ENCODE measurements at regions of chr6 and their contacts with region 1.

Region 1: GRCh38 chr6:148166339-148166968 is 176.2 kb upstream of the SASH1 start:
- DNase-seq: peak; percentile 75
- H3K4me3 ChIP-seq: no peak overlapping the region
- H3K27ac ChIP-seq: no peak overlapping the region
- H3K4me1 ChIP-seq: peaks cover 5% of the 10 kb centered on the region
- H3K27me3 ChIP-seq: no peaks in the 10 kb centered on the region
- CTCF ChIP-seq: peak; percentile 37 to 39
- POLR2A ChIP-seq: no peak

Region 2: DNA sequence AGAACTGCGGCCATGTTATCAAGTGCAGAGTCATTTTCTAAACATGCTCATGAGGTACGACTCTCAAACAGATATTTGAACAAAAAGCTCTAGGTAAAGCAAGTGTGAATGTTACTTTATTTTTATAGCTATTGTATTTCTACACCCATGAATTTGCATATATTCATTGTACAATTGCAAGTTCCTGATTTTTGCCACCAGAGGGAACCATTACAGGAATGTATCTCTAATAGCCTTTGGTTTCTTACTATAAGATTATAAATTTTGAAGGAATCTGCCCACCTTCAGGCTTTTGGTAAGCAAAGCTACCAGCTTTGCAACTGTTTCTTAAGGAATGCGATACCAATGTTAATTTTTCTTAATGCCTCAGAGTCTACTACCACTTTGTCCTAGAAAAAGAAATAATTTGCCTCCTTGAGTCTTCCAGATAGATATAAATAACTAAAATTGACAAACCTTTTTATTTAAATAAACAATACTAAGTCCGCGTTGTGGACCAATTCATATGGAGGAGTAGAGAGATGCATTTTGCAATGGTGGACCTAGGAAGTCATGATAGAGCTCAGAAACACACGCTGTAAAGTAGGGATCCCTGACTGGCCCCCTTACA is 783.4 kb before region 1 on chr6:
- CTCF ChIA-PET with region 1: interaction called, 7 read pairs
- POLR2A ChIA-PET with region 1: no interaction called
- dilution Hi-C with region 1: no loop called
- intact Hi-C with region 1: loop called (anchors 2 kb)
- DNase-seq: peak; percentile 44
- H3K4me3 ChIP-seq: no peak overlapping the region
- H3K27ac ChIP-seq: no peak overlapping the region
- H3K4me1 ChIP-seq: no peaks in the 10 kb centered on the region
- H3K27me3 ChIP-seq: no peaks in the 10 kb centered on the region
- CTCF ChIP-seq: peak; percentile 24 to 33
- POLR2A ChIP-seq: no peak

Region 3: GRCh38 chr6:147390909-147391536 is 775.4 kb before region 1 on chr6:
- CTCF ChIA-PET with region 1: interaction called, 13 read pairs
- POLR2A ChIA-PET with region 1: no interaction called
- dilution Hi-C with region 1: no loop called
- intact Hi-C with region 1: loop called (anchors 1 kb)
- DNase-seq: peak; percentile 52
- H3K4me3 ChIP-seq: no peak overlapping the region
- H3K27ac ChIP-seq: no peak overlapping the region
- H3K4me1 ChIP-seq: no peaks in the 10 kb centered on the region
- H3K27me3 ChIP-seq: no peaks in the 10 kb centered on the region
- CTCF ChIP-seq: peak; percentile 16 to 17
- POLR2A ChIP-seq: no peak

Region 4: DNA sequence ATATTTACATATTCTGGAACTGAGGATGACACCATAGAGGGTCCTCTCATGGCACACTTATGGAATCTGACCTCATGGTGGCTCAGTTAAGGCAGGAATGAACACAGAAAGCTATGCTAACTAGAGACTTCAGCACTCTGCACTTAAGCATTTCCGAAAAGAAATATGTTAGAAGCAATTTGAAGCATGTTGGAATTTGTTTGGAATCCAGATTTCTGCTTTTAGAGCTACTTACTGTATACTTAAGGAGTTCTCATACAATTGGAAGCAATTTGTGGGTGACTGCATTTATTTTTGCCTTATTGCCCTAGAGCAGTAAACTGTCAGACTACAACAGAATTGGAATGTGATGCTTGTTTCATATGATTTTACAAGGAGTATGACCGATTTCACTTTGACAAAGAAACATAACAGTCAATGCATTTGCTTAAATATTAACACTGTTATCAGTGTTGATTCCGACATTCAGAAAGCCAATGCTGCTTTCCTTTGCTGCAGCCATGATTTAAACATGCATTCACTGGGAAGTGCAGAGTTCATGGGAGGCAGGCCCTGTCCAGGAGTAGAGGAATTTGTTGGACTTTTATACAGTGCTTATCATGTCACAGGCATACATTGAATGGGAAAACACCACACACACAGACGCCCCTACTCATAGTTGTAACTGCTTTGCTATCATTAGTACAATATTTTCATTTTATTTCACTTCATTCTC is 413.6 kb before region 1 on chr6:
- CTCF ChIA-PET with region 1: no interaction called
- POLR2A ChIA-PET with region 1: no interaction called
- dilution Hi-C with region 1: no loop called
- intact Hi-C with region 1: no loop called
- DNase-seq: no peak
- H3K4me3 ChIP-seq: no peak overlapping the region
- H3K27ac ChIP-seq: no peak overlapping the region
- H3K4me1 ChIP-seq: no peaks in the 10 kb centered on the region
- H3K27me3 ChIP-seq: no peaks in the 10 kb centered on the region
- CTCF ChIP-seq: no peak
- POLR2A ChIP-seq: no peak

Region 5: GRCh38 chr6:147774856-147775255 is 391.6 kb before region 1 on chr6:
- CTCF ChIA-PET with region 1: no interaction called
- POLR2A ChIA-PET with region 1: no interaction called
- dilution Hi-C with region 1: no loop called
- intact Hi-C with region 1: loop called (anchors 2 kb)
- DNase-seq: no peak
- H3K4me3 ChIP-seq: no peak overlapping the region
- H3K27ac ChIP-seq: no peak overlapping the region
- H3K4me1 ChIP-seq: no peaks in the 10 kb centered on the region
- H3K27me3 ChIP-seq: no peaks in the 10 kb centered on the region
- CTCF ChIP-seq: peak; percentile 16 to 32
- POLR2A ChIP-seq: no peak

Region 6: GRCh38 chr6:147868427-147869190 is 297.8 kb before region 1 on chr6:
- CTCF ChIA-PET with region 1: no interaction called
- POLR2A ChIA-PET with region 1: no interaction called
- dilution Hi-C with region 1: no loop called
- intact Hi-C with region 1: loop called (anchors 5 kb)
- DNase-seq: peak; percentile 80
- H3K4me3 ChIP-seq: peak overlapping the region in 1 of 3 experiments; percentile 32
- H3K27ac ChIP-seq: peak overlapping the region; percentile 90
- H3K4me1 ChIP-seq: peaks cover 34% of the 10 kb centered on the region
- H3K27me3 ChIP-seq: no peaks in the 10 kb centered on the region
- CTCF ChIP-seq: no peak
- POLR2A ChIP-seq: no peak

Region 7: DNA sequence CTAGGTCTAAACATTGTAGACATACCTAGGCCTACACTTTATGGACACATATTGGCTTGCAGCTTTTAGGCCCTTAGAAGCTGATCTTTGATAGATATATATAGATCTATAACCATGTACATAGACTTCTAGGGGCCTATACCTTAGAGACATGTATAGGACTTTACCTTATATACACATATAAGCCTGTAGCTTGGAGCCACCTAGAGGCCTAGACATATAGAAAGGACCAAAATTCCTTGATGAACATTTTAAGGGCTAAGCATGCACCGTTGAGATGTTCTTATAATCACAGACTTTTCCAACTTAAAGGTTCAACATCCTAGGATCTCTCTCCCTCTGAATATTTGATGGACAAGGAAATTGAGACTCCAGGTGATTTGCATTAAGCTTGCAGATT is 195.5 kb before region 1 on chr6:
- CTCF ChIA-PET with region 1: no interaction called
- POLR2A ChIA-PET with region 1: no interaction called
- dilution Hi-C with region 1: no loop called
- intact Hi-C with region 1: loop called (anchors 5 kb)
- DNase-seq: peak; percentile 14
- H3K4me3 ChIP-seq: no peak overlapping the region
- H3K27ac ChIP-seq: no peak overlapping the region
- H3K4me1 ChIP-seq: no peaks in the 10 kb centered on the region
- H3K27me3 ChIP-seq: no peaks in the 10 kb centered on the region
- CTCF ChIP-seq: peak in 1 of 2 donors; percentile 20
- POLR2A ChIP-seq: no peak

Region 8: GRCh38 chr6:148144917-148145521 is 21.4 kb before region 1 on chr6:
- CTCF ChIA-PET with region 1: interaction called, 9 read pairs
- POLR2A ChIA-PET with region 1: no interaction called
- dilution Hi-C with region 1: no loop called
- intact Hi-C with region 1: loop called (anchors 1 kb)
- DNase-seq: peak; percentile 74
- H3K4me3 ChIP-seq: no peak overlapping the region
- H3K27ac ChIP-seq: peak overlapping the region; percentile 99
- H3K4me1 ChIP-seq: peaks cover 41% of the 10 kb centered on the region
- H3K27me3 ChIP-seq: no peaks in the 10 kb centered on the region
- CTCF ChIP-seq: peak; percentile 75 to 81
- POLR2A ChIP-seq: no peak